Endothelial cell of umbilical vein (primary cell): ENCODE measurements at regions of chr11 and their contacts with region 1.

Region 1: GRCh38 chr11:114044042-114044871 is 15.3 kb upstream of the ZBTB16 start:
- DNase-seq: peak; percentile 85
- H3K4me3 ChIP-seq: no peak overlapping the region
- H3K27ac ChIP-seq: peak overlapping the region; percentile 81
- H3K4me1 ChIP-seq: peaks cover 22% of the 10 kb centered on the region
- H3K27me3 ChIP-seq: no peaks in the 10 kb centered on the region
- CTCF ChIP-seq: no peak
- POLR2A ChIP-seq: peak; percentile 19

Region 2: DNA sequence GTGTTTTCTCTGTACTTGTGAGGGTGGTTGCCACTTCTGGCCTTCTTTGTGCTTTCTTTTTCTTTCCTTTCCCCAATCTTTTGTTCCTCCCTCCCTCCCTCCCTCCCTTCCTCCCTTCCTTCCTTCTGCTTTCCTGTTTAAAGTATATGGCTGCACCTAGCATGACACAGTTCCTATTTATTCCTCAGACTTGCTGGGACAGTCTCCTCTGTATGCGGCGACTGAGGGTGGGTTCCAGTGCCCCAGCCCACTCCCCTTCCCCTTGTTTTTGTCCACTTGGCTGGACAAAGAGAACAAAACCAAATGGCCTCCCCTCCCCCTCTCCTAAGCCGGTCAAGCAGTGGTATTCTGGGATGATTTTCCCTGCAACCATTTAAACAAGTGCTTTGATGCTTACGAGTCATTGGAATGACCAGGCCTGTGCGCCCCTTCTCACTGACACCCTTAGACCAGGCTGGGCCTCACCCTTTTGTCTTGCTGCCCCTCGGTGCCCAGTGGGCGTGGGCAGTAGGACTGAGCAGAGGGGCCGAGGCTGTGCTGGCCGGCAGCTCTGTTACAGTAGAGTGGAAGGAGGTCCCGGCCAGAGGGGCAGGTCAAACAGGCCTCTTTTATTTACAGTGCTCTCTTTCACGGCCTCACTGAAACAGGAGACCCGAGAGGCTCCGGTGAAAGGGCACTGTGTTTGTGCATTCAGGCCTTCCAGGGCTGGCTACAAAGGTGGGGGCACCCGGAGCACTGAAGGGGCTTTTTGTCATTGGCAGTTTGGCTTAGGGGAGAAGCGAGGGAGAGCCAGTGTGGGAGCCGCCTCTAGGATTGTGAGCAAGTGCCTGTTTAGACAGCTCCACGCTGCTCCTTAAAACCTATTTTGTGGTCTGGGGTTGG is 47.5 kb after region 1 on chr11:
- CTCF ChIA-PET with region 1: no interaction called
- POLR2A ChIA-PET with region 1: no interaction called
- dilution Hi-C with region 1: no loop called
- intact Hi-C with region 1: no loop called
- DNase-seq: peak; percentile 41
- H3K4me3 ChIP-seq: no peak overlapping the region
- H3K27ac ChIP-seq: peak overlapping the region; percentile 62
- H3K4me1 ChIP-seq: peaks cover 29% of the 10 kb centered on the region
- H3K27me3 ChIP-seq: no peaks in the 10 kb centered on the region
- CTCF ChIP-seq: no peak
- POLR2A ChIP-seq: no peak

Region 3: GRCh38 chr11:114257621-114258558 is 213.6 kb after region 1 on chr11:
- CTCF ChIA-PET with region 1: interaction called, 236 read pairs
- POLR2A ChIA-PET with region 1: no interaction called
- dilution Hi-C with region 1: loop called (anchors 25 kb)
- intact Hi-C with region 1: no loop called
- DNase-seq: peak; percentile 42
- H3K4me3 ChIP-seq: no peak overlapping the region
- H3K27ac ChIP-seq: no peak overlapping the region
- H3K4me1 ChIP-seq: no peaks in the 10 kb centered on the region
- H3K27me3 ChIP-seq: no peaks in the 10 kb centered on the region
- CTCF ChIP-seq: peak; percentile 36 to 56
- POLR2A ChIP-seq: no peak